OCI-LY7 (cell line): ENCODE measurements at regions of chrX and their contacts with region 1.

Region 1: DNA sequence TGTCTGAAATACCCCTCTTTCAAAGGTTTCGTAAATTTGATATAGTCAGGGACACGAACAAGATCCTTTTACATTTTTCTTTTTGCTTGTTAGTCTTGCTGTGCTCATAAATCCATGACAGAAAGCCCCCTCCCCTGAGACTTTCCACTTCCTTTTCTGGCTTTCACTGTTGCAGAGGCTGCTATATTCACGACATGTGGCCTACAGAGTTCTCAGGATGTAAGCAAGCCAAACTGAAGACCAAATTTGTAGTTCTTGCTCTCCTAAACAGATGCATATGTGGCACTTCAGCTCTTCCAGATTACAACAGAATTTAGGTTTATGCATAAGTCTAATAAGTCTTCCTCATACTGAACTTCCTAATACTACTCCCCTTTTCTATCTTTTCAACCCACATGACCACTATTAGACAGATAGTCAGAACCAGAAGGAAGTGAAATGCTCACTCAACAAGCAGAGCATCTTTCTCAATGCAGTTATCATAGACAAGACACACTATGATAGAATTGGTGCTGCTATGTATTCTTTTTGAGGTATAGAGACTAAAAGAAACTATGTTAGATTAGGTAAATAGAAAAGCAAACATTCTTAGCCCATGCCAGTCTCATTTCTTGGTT is 15.0 kb downstream of the BTK start:
- DNase-seq: peak; percentile 79
- H3K4me3 ChIP-seq: peak overlapping the region; percentile 31
- H3K27ac ChIP-seq: peak overlapping the region; percentile 96
- H3K4me1 ChIP-seq: peaks cover 69% of the 10 kb centered on the region
- CTCF ChIP-seq: no peak

Region 2: GRCh38 chrX:101241531-101241930 is 129.5 kb before region 1 on chrX:
- CTCF ChIA-PET with region 1: no interaction called
- POLR2A ChIA-PET with region 1: no interaction called
- intact Hi-C with region 1: no loop called
- DNase-seq: no peak
- H3K4me3 ChIP-seq: no peak overlapping the region
- H3K27ac ChIP-seq: no peak overlapping the region
- H3K4me1 ChIP-seq: no peaks in the 10 kb centered on the region
- CTCF ChIP-seq: no peak

Region 3: DNA sequence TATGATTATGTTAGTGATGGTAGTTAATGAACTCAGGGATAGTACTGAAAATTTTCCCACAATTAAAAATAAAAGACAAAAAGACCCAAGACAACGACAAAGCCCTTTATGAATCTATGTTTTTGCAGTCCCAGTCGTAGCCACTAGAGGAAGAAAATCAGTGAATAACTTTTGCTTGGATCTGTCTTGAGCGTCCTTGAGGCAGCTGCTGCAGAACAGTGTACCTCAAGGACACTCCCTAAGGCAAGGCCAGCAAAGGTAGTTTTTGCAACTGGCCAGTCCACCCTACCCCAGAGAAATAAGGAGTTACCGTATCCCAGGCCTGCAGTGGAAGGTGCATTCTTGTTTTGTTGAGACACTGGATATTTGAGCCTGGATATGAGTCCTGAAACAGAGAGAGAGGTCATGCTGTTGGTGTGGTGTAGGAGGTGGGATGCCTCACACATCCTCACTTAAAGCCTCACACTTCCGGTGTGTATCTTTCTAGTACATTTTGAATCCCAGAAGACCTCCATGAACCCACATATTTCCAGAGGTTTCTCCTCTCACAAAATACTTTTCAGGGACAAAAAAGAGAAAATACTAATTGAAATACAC is 13.7 kb before region 1 on chrX:
- CTCF ChIA-PET with region 1: interaction called, 4 read pairs
- POLR2A ChIA-PET with region 1: interaction called, 17 read pairs
- intact Hi-C with region 1: no loop called
- DNase-seq: peak; percentile 49
- H3K4me3 ChIP-seq: no peak overlapping the region
- H3K27ac ChIP-seq: peak overlapping the region; percentile 89
- H3K4me1 ChIP-seq: peaks cover 42% of the 10 kb centered on the region
- CTCF ChIP-seq: peak; percentile 70